Mammary epithelial cell (primary cell): ENCODE measurements at regions of chr2 and their contacts with region 1.

Region 1: DNA sequence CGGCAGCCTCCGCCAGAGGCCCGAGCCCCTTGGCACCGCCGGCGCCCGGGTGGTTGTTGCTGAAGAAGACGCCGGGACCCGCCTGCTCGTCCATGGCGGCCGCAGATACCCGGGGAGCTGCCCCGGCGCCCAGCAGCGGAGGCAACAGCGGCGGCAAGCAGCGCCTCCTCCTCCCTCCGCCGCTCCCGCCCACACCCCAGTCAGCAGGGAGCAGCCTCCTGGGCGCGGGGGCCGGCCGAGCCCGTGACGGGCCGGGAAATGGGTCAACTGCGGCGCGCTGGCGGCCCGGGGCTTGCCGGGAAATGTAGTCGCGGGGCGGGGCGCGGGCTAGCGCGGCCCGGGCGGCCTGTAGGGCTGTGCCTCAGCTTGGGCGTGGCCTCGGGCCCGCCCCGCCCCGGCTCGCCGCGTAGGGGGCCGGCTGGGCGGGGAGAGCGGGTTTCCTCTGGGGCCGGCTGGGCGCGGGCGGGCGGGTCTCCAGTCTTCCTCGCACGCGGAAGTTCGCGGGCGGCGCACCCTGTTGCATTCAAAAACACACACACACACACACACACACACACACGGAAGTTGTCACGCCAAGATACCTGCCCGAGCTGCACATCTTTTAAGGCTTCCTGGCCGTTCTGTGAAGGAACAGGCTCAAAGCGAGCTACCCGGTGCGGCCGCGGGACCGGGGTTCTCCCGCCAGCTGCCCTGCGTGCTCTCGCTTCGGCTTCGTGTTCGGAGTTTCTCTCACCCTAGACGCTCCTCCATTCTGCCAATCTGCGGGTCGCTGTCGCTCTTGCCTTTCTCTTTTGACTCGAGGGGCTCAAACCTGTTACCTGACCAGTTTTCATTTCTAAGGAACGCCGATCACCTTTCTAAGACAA is at the start of gene STRN:
- DNase-seq: peak; percentile 98
- H3K4me3 ChIP-seq: peak within 1 kb of the TSS; percentile 65 to 80 (median 76)
- H3K27ac ChIP-seq: peak within 1 kb of the TSS; percentile 74
- H3K4me1 ChIP-seq: peaks cover 16% of the 10 kb centered on the region
- H3K27me3 ChIP-seq: no peaks in the 10 kb centered on the region
- CTCF ChIP-seq: no peak
- total RNA-seq, gene STRN: 18.8 to 27.6 TPM

Region 2: GRCh38 chr2:36889795-36890194 is 76.8 kb before region 1 on chr2:
- CTCF ChIA-PET with region 1: interaction called, 3 read pairs
- dilution Hi-C with region 1: no loop called
- in situ Hi-C with region 1: no loop called
- intact Hi-C with region 1: loop called (anchors 5 kb)
- DNase-seq: peak; percentile 97
- H3K4me3 ChIP-seq: peak overlapping the region; percentile 9 to 25 (median 19)
- H3K27ac ChIP-seq: peak overlapping the region; percentile 86
- H3K4me1 ChIP-seq: peaks cover 14% of the 10 kb centered on the region
- H3K27me3 ChIP-seq: no peaks in the 10 kb centered on the region
- CTCF ChIP-seq: no peak

Region 3: GRCh38 chr2:37083873-37084794 is 117.5 kb after region 1 on chr2 and contains the starts of genes GPATCH11 and HEATR5B:
- CTCF ChIA-PET with region 1: no interaction called
- dilution Hi-C with region 1: no loop called
- in situ Hi-C with region 1: no loop called
- intact Hi-C with region 1: loop called (anchors 5 kb)
- DNase-seq: peak; percentile 96
- H3K4me3 ChIP-seq: peak within 1 kb of the TSS; percentile 81 to 86 (median 82)
- H3K27ac ChIP-seq: peak within 1 kb of the TSS; percentile 74
- H3K4me1 ChIP-seq: peaks cover 23% of the 10 kb centered on the region
- H3K27me3 ChIP-seq: no peaks in the 10 kb centered on the region
- CTCF ChIP-seq: no peak
- total RNA-seq, gene GPATCH11: 4.7 to 7.2 TPM
- total RNA-seq, gene HEATR5B: 18.8 to 32.2 TPM